Stomach (tissue), 19 donors: ENCODE measurements at regions of chrX and their contacts with region 1.

Region 1: DNA sequence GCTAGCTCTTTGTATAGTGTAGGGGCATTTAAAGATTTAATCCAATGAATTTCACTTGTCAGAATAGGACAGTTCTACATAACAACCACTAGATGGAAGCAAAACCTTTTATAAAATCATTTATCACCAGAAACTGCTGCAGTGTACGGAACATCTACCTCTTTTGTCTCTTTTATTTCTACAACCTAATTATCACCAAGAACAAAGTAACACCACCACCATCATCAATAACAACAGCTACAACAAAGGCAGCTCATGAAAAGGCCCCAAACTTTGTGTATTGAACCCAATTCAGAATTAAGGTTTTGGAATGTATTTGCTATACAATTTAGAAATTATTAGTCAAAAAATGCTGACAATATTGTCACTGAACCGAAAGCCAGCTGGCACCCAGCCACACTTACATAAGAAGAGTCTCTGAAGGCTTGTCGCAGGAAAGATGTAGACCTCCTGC is 260.9 kb upstream of the RPS6KA3 start:
- DNase-seq: peak in 1 of 2 donors; percentile 33
- H3K4me3 ChIP-seq: no peak overlapping the region
- H3K27ac ChIP-seq: no peak overlapping the region
- H3K4me1 ChIP-seq: peaks cover 0 to 13% (median 0%) of the 10 kb centered on the region in 4 donors
- H3K27me3 ChIP-seq: peaks cover 0 to 13% (median 0%) of the 10 kb centered on the region in 3 donors
- CTCF ChIP-seq: peak in 5 of 7 experiments; percentile 35 to 69 (median 52)
- EP300 ChIP-seq: no peak
- POLR2A ChIP-seq: no peak

Region 2: GRCh38 chrX:20320461-20321159 is 207.0 kb before region 1 on chrX:
- intact Hi-C with region 1: no loop called
- DNase-seq: peak in 1 of 2 donors; percentile 35
- H3K4me3 ChIP-seq: no peak overlapping the region
- H3K27ac ChIP-seq: no peak overlapping the region
- H3K4me1 ChIP-seq: peaks cover 0 to 9% (median 0%) of the 10 kb centered on the region in 4 donors
- H3K27me3 ChIP-seq: no peaks in the 10 kb centered on the region
- CTCF ChIP-seq: no peak
- EP300 ChIP-seq: no peak
- POLR2A ChIP-seq: no peak

Region 3: GRCh38 chrX:21745756-21746155 is 1218.2 kb after region 1 on chrX:
- intact Hi-C with region 1: loop called (anchors 10 kb)
- DNase-seq: peak; percentile 36 to 41
- H3K4me3 ChIP-seq: no peak overlapping the region
- H3K27ac ChIP-seq: no peak overlapping the region
- H3K4me1 ChIP-seq: peaks cover 0 to under 1% (median 0%) of the 10 kb centered on the region in 4 donors
- H3K27me3 ChIP-seq: peaks cover 0 to 8% (median 0%) of the 10 kb centered on the region in 3 donors
- CTCF ChIP-seq: peak in 4 of 7 experiments; percentile 17 to 48 (median 28)
- EP300 ChIP-seq: no peak
- POLR2A ChIP-seq: no peak